ENCODE measurements at regions of chr9 and their contacts with region 1.

Region 1: GRCh38 chr9:136363606-136364370 is at the start of gene DNLZ:
- DNase-seq: peak; percentile 86
- H3K4me3 Mint-ChIP-seq: peak within 1 kb of the TSS; percentile 84
- H3K27ac Mint-ChIP-seq: peak within 1 kb of the TSS; percentile 89
- H3K4me1 Mint-ChIP-seq: peaks cover 5% of the 10 kb centered on the region
- H3K27me3 Mint-ChIP-seq: no peaks in the 10 kb centered on the region
- total RNA-seq, gene DNLZ: 9.9 to 12.0 TPM

Region 2: DNA sequence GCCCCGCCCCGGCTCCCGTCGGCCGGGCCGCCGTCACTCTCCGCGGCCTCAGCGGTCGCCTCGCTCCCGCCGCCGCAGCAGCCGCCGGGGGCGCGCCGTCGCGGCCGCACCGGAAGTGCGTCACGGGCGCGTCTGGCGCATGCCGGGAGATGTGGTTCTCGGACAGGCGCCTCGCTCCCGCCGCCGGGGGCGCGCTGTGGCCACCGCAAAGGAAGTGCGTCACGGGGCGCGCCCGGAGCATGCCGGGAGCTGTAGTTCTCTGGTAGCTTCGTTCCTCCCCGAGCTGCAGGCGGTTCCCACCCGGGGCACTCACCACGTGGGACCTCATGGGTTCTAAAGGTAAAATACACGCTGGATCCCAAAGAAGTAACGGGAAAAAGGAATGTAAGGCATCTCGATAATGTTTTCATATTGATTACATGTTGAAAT is 402.5 kb before region 1 on chr9 and contains the start of gene UBAC1:
- CTCF ChIA-PET with region 1: no interaction called
- intact Hi-C with region 1: loop called (anchors 1 kb)
- DNase-seq: peak; percentile 94
- H3K4me3 Mint-ChIP-seq: peak within 1 kb of the TSS; percentile 87
- H3K27ac Mint-ChIP-seq: peak within 1 kb of the TSS; percentile 50
- H3K4me1 Mint-ChIP-seq: peaks cover 32% of the 10 kb centered on the region
- H3K27me3 Mint-ChIP-seq: no peaks in the 10 kb centered on the region
- total RNA-seq, gene UBAC1: 37.2 to 40.0 TPM

Region 3: DNA sequence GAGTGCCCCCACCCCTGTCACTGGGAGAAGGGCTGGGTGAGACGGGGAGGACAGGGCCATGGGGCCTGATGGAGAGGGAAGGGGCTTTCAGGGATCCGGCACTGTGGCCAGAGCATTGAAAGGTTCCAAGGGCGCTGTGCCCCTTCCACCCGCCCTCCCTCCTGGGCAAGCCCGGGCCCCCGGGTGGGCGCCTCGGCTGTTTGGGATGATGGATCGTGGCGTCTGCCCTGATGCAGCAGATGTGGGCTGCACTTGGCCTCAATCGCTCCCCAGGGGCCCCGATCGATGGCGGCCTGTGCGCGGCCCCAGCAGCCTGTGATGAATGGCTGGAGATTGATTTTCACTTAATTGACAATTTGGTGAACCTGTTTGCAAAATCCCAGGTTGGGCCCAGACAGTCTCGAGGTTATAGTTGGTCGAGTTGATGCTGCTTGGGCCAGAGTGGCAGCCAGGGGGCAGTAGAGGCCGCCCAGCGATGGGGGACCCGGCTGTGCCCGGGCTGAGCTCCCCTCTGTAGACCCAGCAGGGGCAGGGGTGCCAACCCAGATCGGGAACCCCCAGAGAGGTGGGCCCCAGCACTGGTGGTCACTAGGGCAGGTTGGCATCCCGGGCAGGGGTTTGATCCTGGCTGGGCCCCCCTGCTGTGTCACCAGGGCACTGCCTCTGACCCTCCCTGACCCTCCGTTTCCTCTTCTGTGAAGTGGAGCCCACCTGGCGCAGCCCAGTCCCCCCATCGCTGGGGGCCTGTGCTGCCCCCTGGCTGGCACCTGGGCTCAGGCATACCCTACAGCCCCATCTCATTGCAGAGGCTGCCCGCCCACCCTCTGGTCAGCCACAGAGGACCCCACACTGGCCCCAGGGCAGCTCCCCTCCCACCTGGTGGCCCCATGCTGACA is 193.5 kb before region 1 on chr9:
- CTCF ChIA-PET with region 1: no interaction called
- intact Hi-C with region 1: loop called (anchors 1 kb)
- DNase-seq: peak; percentile 72
- H3K4me3 Mint-ChIP-seq: no peak overlapping the region
- H3K27ac Mint-ChIP-seq: no peak overlapping the region
- H3K4me1 Mint-ChIP-seq: no peaks in the 10 kb centered on the region
- H3K27me3 Mint-ChIP-seq: peaks cover 10% of the 10 kb centered on the region

Region 4: GRCh38 chr9:136267261-136268111 is 96.3 kb before region 1 on chr9:
- CTCF ChIA-PET with region 1: no interaction called
- intact Hi-C with region 1: loop called (anchors 1 kb)
- DNase-seq: peak; percentile 85
- H3K4me3 Mint-ChIP-seq: peak overlapping the region; percentile 66
- H3K27ac Mint-ChIP-seq: peak overlapping the region; percentile 41
- H3K4me1 Mint-ChIP-seq: peaks cover 4% of the 10 kb centered on the region
- H3K27me3 Mint-ChIP-seq: peaks cover 2% of the 10 kb centered on the region

Region 5: GRCh38 chr9:136300016-136300545 is 63.7 kb before region 1 on chr9:
- CTCF ChIA-PET with region 1: no interaction called
- intact Hi-C with region 1: no loop called
- DNase-seq: no peak
- H3K4me3 Mint-ChIP-seq: no peak overlapping the region
- H3K27ac Mint-ChIP-seq: no peak overlapping the region
- H3K4me1 Mint-ChIP-seq: no peaks in the 10 kb centered on the region
- H3K27me3 Mint-ChIP-seq: no peaks in the 10 kb centered on the region

Region 6: GRCh38 chr9:136312436-136312835 is 51.4 kb before region 1 on chr9:
- CTCF ChIA-PET with region 1: interaction called, 6 read pairs
- intact Hi-C with region 1: loop called (anchors 1 kb)
- DNase-seq: peak; percentile 55
- H3K4me3 Mint-ChIP-seq: no peak overlapping the region
- H3K27ac Mint-ChIP-seq: no peak overlapping the region
- H3K4me1 Mint-ChIP-seq: no peaks in the 10 kb centered on the region
- H3K27me3 Mint-ChIP-seq: no peaks in the 10 kb centered on the region

Region 7: GRCh38 chr9:136545966-136546698 is 182.3 kb after region 1 on chr9 and contains the start of gene NOTCH1:
- CTCF ChIA-PET with region 1: interaction called, 3 read pairs
- intact Hi-C with region 1: loop called (anchors 2 kb)
- DNase-seq: peak; percentile 88
- H3K4me3 Mint-ChIP-seq: peak within 1 kb of the TSS; percentile 94
- H3K27ac Mint-ChIP-seq: peak within 1 kb of the TSS; percentile 95
- H3K4me1 Mint-ChIP-seq: peaks cover 44% of the 10 kb centered on the region
- H3K27me3 Mint-ChIP-seq: no peaks in the 10 kb centered on the region
- total RNA-seq, gene NOTCH1: 71.4 to 80.2 TPM

Region 8: DNA sequence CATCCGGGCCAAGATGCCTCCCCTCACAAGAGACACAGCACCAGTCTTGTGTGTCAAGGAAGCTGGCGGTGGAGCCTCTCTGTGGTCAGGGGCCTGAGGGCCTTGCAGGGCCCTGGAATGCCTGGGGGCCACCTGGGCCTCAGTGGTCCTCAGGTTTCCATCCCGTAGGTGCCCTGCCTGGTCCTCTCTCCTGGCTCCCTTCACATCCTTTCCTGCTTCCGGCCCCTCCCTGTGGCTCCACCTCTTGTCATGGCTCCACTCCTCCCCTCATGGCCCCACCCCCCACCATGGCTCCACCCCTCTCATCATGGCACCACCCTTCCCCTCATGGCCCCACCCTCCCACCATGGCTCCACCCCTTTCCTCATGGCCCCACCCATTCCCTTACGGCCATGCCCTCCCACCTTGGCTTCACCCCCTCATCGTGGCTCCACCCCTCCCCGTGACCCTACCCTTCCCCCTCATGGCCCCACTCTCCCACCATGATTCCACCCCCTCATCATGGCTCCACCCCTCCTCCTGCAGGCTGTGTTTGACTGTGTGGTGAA is 1689.6 kb after region 1 on chr9:
- CTCF ChIA-PET with region 1: no interaction called
- intact Hi-C with region 1: no loop called
- DNase-seq: no peak
- H3K4me3 Mint-ChIP-seq: no peak overlapping the region
- H3K27ac Mint-ChIP-seq: no peak overlapping the region
- H3K4me1 Mint-ChIP-seq: no peaks in the 10 kb centered on the region
- H3K27me3 Mint-ChIP-seq: peaks cover 3% of the 10 kb centered on the region

Measured in activated naive CD4-positive, alpha-beta T cell treated with anti-CD3 and anti-CD28 coated beads for 36 hours (primary cell).